Heart right ventricle (tissue), 16 donors: ENCODE measurements at regions of chr7 and their contacts with region 1.

Region 1: DNA sequence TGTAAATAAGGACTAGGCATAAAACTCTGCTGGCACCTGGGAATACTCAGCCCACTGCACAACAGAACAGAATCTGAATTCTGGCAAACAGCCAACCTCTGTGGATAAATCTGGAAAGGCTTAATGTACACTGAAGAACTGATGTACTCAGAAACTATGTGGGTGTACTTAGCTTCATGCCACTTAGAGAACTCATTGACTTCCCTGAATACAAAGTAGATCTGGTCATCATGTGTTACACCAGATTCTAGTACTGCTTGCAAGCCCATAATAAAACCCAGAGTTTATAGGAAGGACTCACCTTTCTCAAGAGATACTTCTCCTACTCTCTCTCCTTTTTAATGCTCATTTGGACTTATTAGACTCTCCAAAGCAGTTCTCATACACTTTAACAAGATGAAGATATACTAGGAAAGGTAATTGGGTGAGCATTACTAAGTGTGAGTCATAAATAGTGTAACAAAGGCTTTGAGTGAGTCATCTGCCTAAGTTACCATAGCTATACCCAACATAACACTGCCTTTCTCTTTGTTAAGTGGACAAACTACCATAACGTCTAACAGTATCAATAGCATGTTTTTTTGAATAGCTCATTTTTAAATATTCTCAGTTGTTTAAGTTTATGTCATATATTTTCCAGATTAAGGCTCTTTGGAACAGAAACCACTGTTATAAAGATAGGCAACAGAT is 309.1 kb downstream of the MDFIC start:
- DNase-seq: peak in 1 of 2 donors; percentile 6
- ATAC-seq: peak in 4 of 8 donors; percentile 41 to 90 (median 70)
- H3K4me3 ChIP-seq: no peak overlapping the region
- H3K27ac ChIP-seq: no peak overlapping the region
- H3K4me1 ChIP-seq: peaks cover 0 to 12% (median 0%) of the 10 kb centered on the region in 9 donors
- H3K27me3 ChIP-seq: no peaks in the 10 kb centered on the region
- CTCF ChIP-seq: no peak

Region 2: GRCh38 chr7:114740095-114740494 is 490.9 kb before region 1 on chr7:
- intact Hi-C with region 1: loop called in 1 of 10 experiments (anchors 5 kb)
- DNase-seq: no peak
- ATAC-seq: no peak
- H3K4me3 ChIP-seq: no peak overlapping the region
- H3K27ac ChIP-seq: no peak overlapping the region
- H3K4me1 ChIP-seq: no peaks in the 10 kb centered on the region
- H3K27me3 ChIP-seq: no peaks in the 10 kb centered on the region
- CTCF ChIP-seq: no peak

Region 3: GRCh38 chr7:115369008-115369407 is 138.0 kb after region 1 on chr7:
- intact Hi-C with region 1: no loop called
- DNase-seq: no peak
- ATAC-seq: no peak
- H3K4me3 ChIP-seq: no peak overlapping the region
- H3K27ac ChIP-seq: no peak overlapping the region
- H3K4me1 ChIP-seq: no peaks in the 10 kb centered on the region
- H3K27me3 ChIP-seq: no peaks in the 10 kb centered on the region
- CTCF ChIP-seq: no peak

Region 4: DNA sequence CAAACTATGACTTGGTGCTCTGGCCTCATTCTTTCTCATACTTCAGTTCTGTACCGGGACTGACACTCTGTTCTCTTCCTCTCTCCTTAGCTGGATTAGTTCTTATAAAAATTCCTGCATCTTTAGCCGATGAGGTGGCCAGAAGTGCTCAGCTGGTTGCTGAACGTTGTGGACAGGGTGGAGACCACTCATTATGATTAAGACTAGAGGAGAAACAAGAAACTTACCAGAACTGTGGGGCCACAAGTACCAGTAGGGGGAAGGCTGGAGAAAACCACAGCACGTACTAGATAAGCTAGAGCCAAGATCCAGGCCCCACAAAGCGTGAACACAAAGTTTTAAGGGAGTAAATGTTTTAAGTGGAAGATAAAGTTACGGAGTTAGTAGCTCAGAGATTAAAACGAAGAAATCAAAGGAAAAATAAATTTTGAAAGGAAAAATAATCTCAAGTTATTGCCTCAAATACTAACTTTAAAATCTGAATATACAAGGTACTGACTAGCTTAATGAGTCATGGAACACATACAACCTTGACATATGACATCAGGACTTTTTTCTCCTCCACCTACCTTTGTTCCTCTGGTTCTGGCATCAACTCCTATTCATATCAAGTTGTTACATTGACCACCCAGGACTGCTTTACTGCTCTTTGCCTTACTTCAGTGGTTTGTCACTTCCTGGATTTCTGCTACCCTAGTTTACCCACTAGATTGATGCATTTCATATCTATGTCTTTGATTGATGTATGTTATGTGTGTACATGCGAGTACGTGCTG is 330.5 kb after region 1 on chr7:
- intact Hi-C with region 1: loop called in 1 of 10 experiments (anchors 5 kb)
- DNase-seq: no peak
- ATAC-seq: no peak
- H3K4me3 ChIP-seq: no peak overlapping the region
- H3K27ac ChIP-seq: no peak overlapping the region
- H3K4me1 ChIP-seq: no peaks in the 10 kb centered on the region
- H3K27me3 ChIP-seq: peaks cover 0 to 4% (median 0%) of the 10 kb centered on the region in 7 donors
- CTCF ChIP-seq: no peak